PC-3 (cell line): ENCODE measurements at regions of chr20 and their contacts with region 1.

Region 1: DNA sequence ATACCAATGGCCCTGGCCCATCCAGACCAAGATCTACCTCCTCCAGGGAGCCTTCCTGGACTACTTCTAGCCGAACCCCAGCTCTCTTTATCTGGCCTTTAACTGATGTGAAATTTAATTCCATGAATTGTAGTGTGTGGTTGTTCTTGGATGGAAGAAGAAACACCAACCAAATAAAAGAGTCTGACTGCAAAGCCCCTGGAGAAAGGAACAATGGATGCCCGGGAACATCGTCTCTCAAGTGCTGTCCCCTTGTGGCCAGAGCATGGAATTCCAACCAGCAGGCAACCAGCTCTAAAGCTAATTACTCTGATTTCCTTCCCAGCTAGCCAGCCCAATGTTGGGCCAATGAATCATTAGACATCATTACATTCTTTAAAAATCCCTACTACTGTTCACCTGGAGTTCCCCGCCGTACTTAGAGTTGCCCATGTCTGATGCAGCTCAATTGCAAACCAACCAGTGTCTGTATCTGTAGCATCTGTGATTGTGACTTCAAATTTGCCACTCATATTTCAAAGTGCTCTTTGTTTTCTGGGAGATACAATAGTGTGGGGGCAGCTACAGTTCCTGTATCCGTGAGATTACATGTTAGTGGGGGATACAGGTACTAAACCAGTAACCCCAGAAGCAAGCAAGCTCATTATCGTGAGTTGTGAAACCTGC is 141.1 kb downstream of the ANKRD60 start:
- DNase-seq: peak; percentile 89
- ATAC-seq: peak; percentile 75
- H3K4me3 ChIP-seq: no peak overlapping the region
- H3K27ac ChIP-seq: peak overlapping the region; percentile 20
- H3K4me1 ChIP-seq: peaks cover 33% of the 10 kb centered on the region
- H3K27me3 ChIP-seq: no peaks in the 10 kb centered on the region
- CTCF ChIP-seq: peak; percentile 99

Region 2: GRCh38 chr20:57596998-57597939 is 490.1 kb before region 1 on chr20:
- CTCF ChIA-PET with region 1: no interaction called
- POLR2A ChIA-PET with region 1: no interaction called
- intact Hi-C with region 1: loop called (anchors 1 kb)
- DNase-seq: peak; percentile 72
- ATAC-seq: peak; percentile 79
- H3K4me3 ChIP-seq: peak overlapping the region; percentile 62
- H3K27ac ChIP-seq: no peak overlapping the region
- H3K4me1 ChIP-seq: peaks cover 18% of the 10 kb centered on the region
- H3K27me3 ChIP-seq: no peaks in the 10 kb centered on the region
- CTCF ChIP-seq: peak; percentile 98

Region 3: GRCh38 chr20:57622579-57623377 is 464.5 kb before region 1 on chr20:
- CTCF ChIA-PET with region 1: interaction called, 6 read pairs
- POLR2A ChIA-PET with region 1: no interaction called
- intact Hi-C with region 1: loop called (anchors 10 kb)
- DNase-seq: peak; percentile 99
- ATAC-seq: peak; percentile 67
- H3K4me3 ChIP-seq: 0 out of 2 replicates have a peak overlapping the region, but pooled peaks have one; percentile 5
- H3K27ac ChIP-seq: peak overlapping the region; percentile 35
- H3K4me1 ChIP-seq: peaks cover 50% of the 10 kb centered on the region
- H3K27me3 ChIP-seq: no peaks in the 10 kb centered on the region
- CTCF ChIP-seq: peak; percentile 99

Region 4: DNA sequence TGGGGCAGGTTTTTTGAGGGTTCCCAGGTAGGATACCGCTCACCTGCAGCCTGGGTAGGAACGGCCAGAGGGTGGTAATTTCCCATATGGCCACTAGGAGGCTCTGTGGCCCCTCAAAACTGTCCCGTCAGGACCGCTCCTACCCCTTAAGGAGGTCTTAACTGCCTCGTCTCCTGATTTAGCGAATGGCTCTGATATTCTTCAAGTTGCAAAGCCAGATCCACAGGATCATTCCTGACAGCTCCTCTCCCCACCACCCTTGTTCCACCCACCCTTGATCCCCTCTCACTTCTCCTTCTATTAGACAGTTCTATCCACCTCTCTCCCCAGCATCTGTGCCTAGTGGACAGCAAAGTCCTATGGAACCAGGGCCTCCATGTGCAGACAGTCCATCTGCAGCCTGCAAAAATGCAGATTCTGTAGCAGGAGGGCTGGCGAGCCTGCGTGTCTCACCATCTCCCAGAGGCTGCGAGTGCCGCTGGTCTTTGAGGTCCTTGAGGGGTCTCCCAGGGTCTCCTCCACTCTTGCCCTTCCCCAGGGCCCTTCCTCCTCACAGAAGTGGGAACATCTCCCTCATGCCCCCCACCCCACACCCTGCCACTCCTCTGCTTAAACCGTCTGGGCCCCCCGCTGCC is 432.8 kb before region 1 on chr20:
- CTCF ChIA-PET with region 1: interaction called, 3 read pairs
- POLR2A ChIA-PET with region 1: interaction called, 3 read pairs
- intact Hi-C with region 1: loop called (anchors 1 kb)
- DNase-seq: peak; percentile 79
- ATAC-seq: peak; percentile 94
- H3K4me3 ChIP-seq: no peak overlapping the region
- H3K27ac ChIP-seq: no peak overlapping the region
- H3K4me1 ChIP-seq: no peaks in the 10 kb centered on the region
- H3K27me3 ChIP-seq: no peaks in the 10 kb centered on the region
- CTCF ChIP-seq: peak; percentile 98

Region 5: DNA sequence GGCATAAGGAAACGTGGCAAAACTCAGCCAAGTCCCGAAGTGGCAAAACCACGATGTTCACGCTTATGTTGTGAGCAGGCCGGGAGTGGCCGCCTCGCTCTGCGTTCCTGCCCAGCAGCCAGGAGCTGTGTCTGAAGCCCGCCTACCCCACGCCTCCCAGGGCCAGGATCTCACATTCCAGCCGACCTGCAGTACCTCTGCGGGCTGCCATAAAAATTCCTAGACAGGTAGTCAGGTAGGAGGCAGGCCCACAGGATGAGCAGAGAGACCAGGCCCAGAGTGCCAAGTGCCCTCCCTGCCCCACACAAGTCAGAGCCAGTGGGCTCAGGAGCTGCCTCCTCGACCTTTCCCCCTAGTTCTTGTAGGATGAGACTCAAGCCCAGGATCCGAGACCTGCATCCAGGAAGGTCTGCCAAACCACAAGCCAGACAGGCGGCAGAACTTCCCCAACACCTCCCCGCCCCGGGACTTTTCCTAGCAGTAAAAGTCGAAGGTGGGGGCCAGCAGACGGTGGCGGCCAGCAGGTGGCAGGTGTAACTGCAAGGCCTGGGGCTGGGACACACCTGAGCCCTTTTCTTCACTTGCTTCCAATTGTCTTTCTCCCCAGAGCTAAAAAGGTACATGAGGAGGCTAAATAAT is 394.2 kb before region 1 on chr20:
- CTCF ChIA-PET with region 1: interaction called, 4 read pairs
- POLR2A ChIA-PET with region 1: no interaction called
- intact Hi-C with region 1: loop called (anchors 2 kb)
- DNase-seq: peak; percentile 100
- ATAC-seq: peak; percentile 74
- H3K4me3 ChIP-seq: peak overlapping the region; percentile 26; the same call in 1 of the 2 replicates
- H3K27ac ChIP-seq: peak overlapping the region; percentile 90
- H3K4me1 ChIP-seq: peaks cover 80% of the 10 kb centered on the region
- H3K27me3 ChIP-seq: no peaks in the 10 kb centered on the region
- CTCF ChIP-seq: peak; percentile 93

Region 6: GRCh38 chr20:57856658-57857057 is 230.7 kb before region 1 on chr20:
- CTCF ChIA-PET with region 1: no interaction called
- POLR2A ChIA-PET with region 1: no interaction called
- intact Hi-C with region 1: loop called (anchors 2 kb)
- DNase-seq: peak; percentile 75
- ATAC-seq: no peak; the same call in 1 of the 2 replicates
- H3K4me3 ChIP-seq: no peak overlapping the region
- H3K27ac ChIP-seq: peak overlapping the region; percentile 56
- H3K4me1 ChIP-seq: peaks cover 25% of the 10 kb centered on the region
- H3K27me3 ChIP-seq: no peaks in the 10 kb centered on the region
- CTCF ChIP-seq: peak; percentile 28; the same call in 1 of the 2 replicates

Region 7: GRCh38 chr20:58044931-58045586 is 42.3 kb before region 1 on chr20:
- CTCF ChIA-PET with region 1: no interaction called
- POLR2A ChIA-PET with region 1: no interaction called
- intact Hi-C with region 1: no loop called
- DNase-seq: no peak
- ATAC-seq: no peak
- H3K4me3 ChIP-seq: no peak overlapping the region
- H3K27ac ChIP-seq: no peak overlapping the region
- H3K4me1 ChIP-seq: no peaks in the 10 kb centered on the region
- H3K27me3 ChIP-seq: no peaks in the 10 kb centered on the region
- CTCF ChIP-seq: no peak

Region 8: GRCh38 chr20:58179432-58180099 is 92.2 kb after region 1 on chr20:
- CTCF ChIA-PET with region 1: no interaction called
- POLR2A ChIA-PET with region 1: no interaction called
- intact Hi-C with region 1: loop called (anchors 5 kb)
- DNase-seq: peak; percentile 77
- ATAC-seq: peak; percentile 93
- H3K4me3 ChIP-seq: peak overlapping the region; percentile 66
- H3K27ac ChIP-seq: peak overlapping the region; percentile 4; the same call in 1 of the 2 replicates
- H3K4me1 ChIP-seq: peaks cover 12% of the 10 kb centered on the region
- H3K27me3 ChIP-seq: no peaks in the 10 kb centered on the region
- CTCF ChIP-seq: peak; percentile 99

Region 9: GRCh38 chr20:58236612-58237330 is 149.4 kb after region 1 on chr20:
- CTCF ChIA-PET with region 1: no interaction called
- POLR2A ChIA-PET with region 1: no interaction called
- intact Hi-C with region 1: no loop called
- DNase-seq: peak; percentile 90
- ATAC-seq: peak; percentile 88
- H3K4me3 ChIP-seq: peak overlapping the region; percentile 71
- H3K27ac ChIP-seq: peak overlapping the region; percentile 40
- H3K4me1 ChIP-seq: peaks cover 26% of the 10 kb centered on the region
- H3K27me3 ChIP-seq: no peaks in the 10 kb centered on the region
- CTCF ChIP-seq: peak; percentile 99